ENCODE measurements at regions of chr7 and their contacts with region 1.

Region 1: GRCh38 chr7:150356265-150356897 is 12.2 kb upstream of the REPIN1 start:
- DNase-seq: peak; percentile 41
- H3K4me3 Mint-ChIP-seq: no peak overlapping the region
- H3K27ac Mint-ChIP-seq: peak overlapping the region; percentile 55
- H3K4me1 Mint-ChIP-seq: peaks cover 46% of the 10 kb centered on the region
- H3K27me3 Mint-ChIP-seq: peaks cover 12% of the 10 kb centered on the region

Region 2: GRCh38 chr7:150404805-150405583 is 48.6 kb after region 1 on chr7:
- CTCF ChIA-PET with region 1: interaction called, 14 read pairs
- DNase-seq: peak; percentile 86
- H3K4me3 Mint-ChIP-seq: peak overlapping the region; percentile 80
- H3K27ac Mint-ChIP-seq: peak overlapping the region; percentile 95
- H3K4me1 Mint-ChIP-seq: peaks cover 50% of the 10 kb centered on the region
- H3K27me3 Mint-ChIP-seq: no peaks in the 10 kb centered on the region

Region 3: GRCh38 chr7:150430465-150431085 is 74.2 kb after region 1 on chr7:
- CTCF ChIA-PET with region 1: interaction called, 10 read pairs
- DNase-seq: peak; percentile 10
- H3K4me3 Mint-ChIP-seq: no peak overlapping the region
- H3K27ac Mint-ChIP-seq: no peak overlapping the region
- H3K4me1 Mint-ChIP-seq: peaks cover 37% of the 10 kb centered on the region
- H3K27me3 Mint-ChIP-seq: peaks cover 46% of the 10 kb centered on the region

Region 4: GRCh38 chr7:150448789-150449147 is 92.4 kb after region 1 on chr7:
- CTCF ChIA-PET with region 1: no interaction called
- DNase-seq: peak; percentile 92
- H3K4me3 Mint-ChIP-seq: peak overlapping the region; percentile 89
- H3K27ac Mint-ChIP-seq: peak overlapping the region; percentile 91
- H3K4me1 Mint-ChIP-seq: peaks cover 52% of the 10 kb centered on the region
- H3K27me3 Mint-ChIP-seq: no peaks in the 10 kb centered on the region